ENCODE measurements at regions of chr15 and their contacts with region 1.

Region 1: DNA sequence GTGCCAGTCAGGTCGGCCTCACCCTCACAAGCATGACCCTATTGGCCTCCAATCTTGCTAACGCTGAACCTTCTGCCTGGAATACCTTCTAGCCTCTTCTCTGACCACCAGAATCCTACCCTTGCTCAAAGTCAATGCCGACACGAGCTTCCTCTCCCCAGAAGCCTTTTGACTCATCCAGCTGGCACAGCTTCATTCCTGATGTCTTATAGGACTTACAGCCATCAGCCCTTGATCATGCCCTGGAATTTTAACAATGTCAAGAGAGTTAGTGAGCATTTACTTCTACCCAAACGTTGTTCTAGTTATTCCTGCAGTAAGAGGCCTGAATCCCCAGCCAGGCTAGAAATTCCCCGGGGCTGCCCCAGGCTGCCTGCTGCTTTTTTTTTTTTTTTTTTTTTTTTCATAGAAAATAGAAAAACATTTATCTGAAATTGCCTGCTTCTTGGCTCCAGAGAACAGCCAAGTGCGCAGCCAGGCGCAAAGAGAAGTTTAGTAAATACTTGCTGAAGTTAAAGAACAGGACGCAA is 3.9 kb downstream of the CYP1A2 start:
- DNase-seq: no peak
- ATAC-seq: no peak
- H3K4me3 ChIP-seq: no peak overlapping the region
- H3K27ac ChIP-seq: no peak overlapping the region
- H3K4me1 ChIP-seq: no peaks in the 10 kb centered on the region
- H3K27me3 ChIP-seq: no peaks in the 10 kb centered on the region
- CTCF ChIP-seq: no peak

Region 2: GRCh38 chr15:74620636-74621545 is 131.7 kb before region 1 on chr15:
- intact Hi-C with region 1: loop called in 1 of 3 experiments (anchors 10 kb)
- DNase-seq: peak in 5 of 6 donors; percentile 51 to 82 (median 71)
- ATAC-seq: peak; percentile 29 to 80 (median 74)
- H3K4me3 ChIP-seq: no peak overlapping the region
- H3K27ac ChIP-seq: no peak overlapping the region
- H3K4me1 ChIP-seq: peaks cover 12 to 15% (median 13%) of the 10 kb centered on the region in 3 donors
- H3K27me3 ChIP-seq: no peaks in the 10 kb centered on the region
- CTCF ChIP-seq: peak; percentile 32 to 66 (median 40)

Measured in pancreas (tissue), 10 donors.